PC-9 (cell line): ENCODE measurements at regions of chr4 and their contacts with region 1.

Region 1: DNA sequence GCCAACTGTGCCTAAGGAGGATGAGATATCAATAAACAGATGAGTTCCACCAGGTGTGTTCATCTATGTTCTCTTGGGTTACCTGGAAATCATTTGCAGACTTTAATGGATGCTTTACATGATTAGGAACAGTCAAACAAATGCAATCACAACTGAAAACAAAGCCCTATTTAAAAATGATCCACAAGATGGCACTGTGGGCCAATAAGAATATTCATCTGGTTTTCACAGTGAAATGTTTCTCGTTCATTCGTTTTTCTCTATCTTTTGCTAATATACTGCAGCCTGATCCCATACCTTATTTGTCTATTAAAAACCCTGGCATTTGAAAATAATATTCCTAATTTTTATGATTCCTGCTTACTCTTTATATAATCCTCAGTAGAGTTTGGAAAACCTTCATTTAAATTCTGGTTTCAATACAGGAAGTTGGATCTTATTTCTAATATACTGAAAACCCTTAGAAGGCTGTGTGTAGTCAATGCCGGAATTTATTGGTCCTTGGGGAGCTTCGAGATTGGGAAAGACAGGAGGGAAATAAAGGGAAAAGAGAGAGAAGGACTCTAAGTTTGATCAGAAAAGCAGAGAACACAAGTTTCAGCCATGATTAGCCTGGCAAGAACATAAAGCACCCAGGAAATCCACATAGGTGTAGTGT is 63.8 kb upstream of the TAPT1 start:
- DNase-seq: no peak
- H3K4me3 ChIP-seq: no peak overlapping the region
- H3K27ac ChIP-seq: no peak overlapping the region
- H3K4me1 ChIP-seq: no peaks in the 10 kb centered on the region
- H3K27me3 ChIP-seq: peaks cover 6% of the 10 kb centered on the region; the same call in 1 of the 2 replicates
- CTCF ChIP-seq: peak; percentile 63

Region 2: GRCh38 chr4:16443504-16444088 is 153.6 kb after region 1 on chr4:
- CTCF ChIA-PET with region 1: no interaction called
- POLR2A ChIA-PET with region 1: no interaction called
- intact Hi-C with region 1: loop called (anchors 10 kb)
- DNase-seq: no peak
- H3K4me3 ChIP-seq: no peak overlapping the region
- H3K27ac ChIP-seq: no peak overlapping the region
- H3K4me1 ChIP-seq: no peaks in the 10 kb centered on the region
- H3K27me3 ChIP-seq: no peaks in the 10 kb centered on the region
- CTCF ChIP-seq: peak; percentile 65

Region 3: GRCh38 chr4:16916719-16917337 is 626.8 kb after region 1 on chr4:
- CTCF ChIA-PET with region 1: no interaction called
- POLR2A ChIA-PET with region 1: no interaction called
- intact Hi-C with region 1: loop called (anchors 5 kb)
- DNase-seq: peak in 1 of 2 experiments; percentile 49
- H3K4me3 ChIP-seq: no peak overlapping the region
- H3K27ac ChIP-seq: no peak overlapping the region
- H3K4me1 ChIP-seq: no peaks in the 10 kb centered on the region
- H3K27me3 ChIP-seq: no peaks in the 10 kb centered on the region
- CTCF ChIP-seq: peak; percentile 76

Region 4: GRCh38 chr4:17447675-17448298 is 1157.8 kb after region 1 on chr4:
- CTCF ChIA-PET with region 1: no interaction called
- POLR2A ChIA-PET with region 1: no interaction called
- intact Hi-C with region 1: loop called (anchors 5 kb)
- DNase-seq: peak in 1 of 2 experiments; percentile 23
- H3K4me3 ChIP-seq: no peak overlapping the region
- H3K27ac ChIP-seq: no peak overlapping the region
- H3K4me1 ChIP-seq: no peaks in the 10 kb centered on the region
- H3K27me3 ChIP-seq: peaks cover 4% of the 10 kb centered on the region; the same call in 1 of the 2 replicates
- CTCF ChIP-seq: peak; percentile 74

Region 5: GRCh38 chr4:17475481-17475880 is 1185.5 kb after region 1 on chr4:
- CTCF ChIA-PET with region 1: no interaction called
- POLR2A ChIA-PET with region 1: no interaction called
- intact Hi-C with region 1: loop called (anchors 10 kb)
- DNase-seq: no peak
- H3K4me3 ChIP-seq: no peak overlapping the region
- H3K27ac ChIP-seq: no peak overlapping the region
- H3K4me1 ChIP-seq: no peaks in the 10 kb centered on the region
- H3K27me3 ChIP-seq: no peaks in the 10 kb centered on the region
- CTCF ChIP-seq: no peak